SK-N-SH (cell line): ENCODE measurements at regions of chr12 and their contacts with region 1.

Region 1: DNA sequence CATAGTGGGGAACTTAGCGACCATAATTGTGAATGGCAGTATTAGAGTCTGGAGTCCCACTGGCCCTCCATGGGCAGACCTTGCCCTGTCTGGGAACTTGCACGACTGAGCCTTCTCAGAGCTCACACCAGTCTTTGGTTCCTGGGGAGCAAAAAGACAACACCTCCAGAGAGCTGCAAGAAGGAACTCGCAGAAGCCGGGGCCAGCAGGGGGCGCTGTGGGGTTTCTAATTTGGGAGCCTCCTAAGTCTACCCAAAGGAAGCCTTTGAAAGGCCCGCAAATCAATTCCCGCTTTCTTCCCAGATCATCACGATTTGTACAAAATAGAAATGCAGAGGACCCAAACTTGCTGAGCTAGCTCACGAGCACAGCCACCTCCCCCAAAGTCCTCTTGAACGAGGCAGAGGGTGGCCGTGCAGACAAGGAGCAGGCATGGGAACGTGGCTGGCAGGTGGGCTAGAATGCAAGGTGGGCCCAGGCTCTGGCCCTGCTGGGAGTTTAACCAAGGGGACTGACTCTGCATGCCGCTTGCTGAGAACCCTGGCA is 46.3 kb upstream of the FBXO21 start:
- DNase-seq: peak; percentile 70
- H3K4me3 ChIP-seq: no peak overlapping the region; a peak in 1 of 4 replicates
- H3K27ac ChIP-seq: no peak overlapping the region
- H3K4me1 ChIP-seq: no peaks in the 10 kb centered on the region
- H3K27me3 ChIP-seq: no peaks in the 10 kb centered on the region; the same call in 1 of the 2 replicates
- CTCF ChIP-seq: peak; percentile 77
- EP300 ChIP-seq: no peak
- RAD21 ChIP-seq: peak; percentile 80

Region 2: DNA sequence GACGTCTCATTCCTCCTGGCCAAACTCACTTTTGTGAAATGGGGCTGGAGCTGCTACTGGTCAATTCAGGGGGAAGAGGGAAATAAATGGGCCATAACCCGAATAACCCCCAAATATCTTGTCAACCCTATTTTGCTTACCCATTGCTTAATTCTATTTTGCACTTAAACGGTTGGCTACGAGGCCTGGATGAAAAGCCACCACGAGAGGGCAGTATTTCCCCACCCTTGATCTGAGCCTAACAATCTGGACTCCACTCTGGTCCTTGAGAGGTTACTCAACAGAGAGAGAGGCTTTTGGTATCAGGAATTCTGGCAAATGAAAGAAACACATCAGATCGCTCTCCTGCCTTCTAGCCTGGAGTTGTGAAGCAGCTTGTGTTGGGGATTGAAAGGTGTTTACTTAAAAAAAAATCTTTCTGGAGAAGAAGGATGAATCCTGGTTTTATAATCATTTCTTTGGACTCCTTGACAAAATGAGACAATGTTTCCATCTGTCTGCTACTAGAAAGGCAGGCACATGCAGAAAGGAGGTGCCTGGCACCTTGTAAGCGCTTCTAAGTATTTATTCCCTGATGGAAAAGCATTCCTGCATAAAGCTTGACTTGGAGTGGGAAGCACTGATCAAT is 23.9 kb before region 1 on chr12:
- CTCF ChIA-PET with region 1: interaction called, 15 read pairs
- POLR2A ChIA-PET with region 1: no interaction called
- DNase-seq: peak; percentile 83
- H3K4me3 ChIP-seq: peak overlapping the region in 1 of 2 experiments; percentile 35; a peak in 1 of 4 replicates
- H3K27ac ChIP-seq: no peak overlapping the region
- H3K4me1 ChIP-seq: no peaks in the 10 kb centered on the region; a peak in 1 of 4 replicates
- H3K27me3 ChIP-seq: no peaks in the 10 kb centered on the region; the same call in 1 of the 2 replicates
- CTCF ChIP-seq: peak; percentile 96
- EP300 ChIP-seq: no peak
- RAD21 ChIP-seq: peak; percentile 92

Region 3: DNA sequence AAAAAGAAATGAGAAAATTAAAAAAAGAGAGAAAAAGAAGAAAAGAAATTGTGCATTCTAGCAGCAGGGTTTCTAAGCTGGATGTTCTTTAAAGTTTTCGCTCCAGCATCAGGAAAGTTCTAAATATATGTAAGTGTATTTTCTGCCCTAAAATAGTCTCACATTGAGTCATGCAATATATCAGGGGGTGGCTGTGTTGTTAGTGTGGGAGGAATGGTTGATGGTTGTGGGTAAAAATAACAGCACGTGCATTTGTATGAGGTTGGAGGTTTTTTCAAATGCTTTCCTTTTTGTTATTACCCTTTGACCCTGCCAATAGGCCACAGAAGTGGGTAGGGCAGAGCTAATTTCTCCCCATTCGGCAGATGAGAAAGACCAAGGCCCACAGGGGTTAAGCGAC is 18.9 kb after region 1 on chr12:
- CTCF ChIA-PET with region 1: interaction called, 45 read pairs
- POLR2A ChIA-PET with region 1: no interaction called
- DNase-seq: no peak
- H3K4me3 ChIP-seq: no peak overlapping the region
- H3K27ac ChIP-seq: no peak overlapping the region
- H3K4me1 ChIP-seq: no peaks in the 10 kb centered on the region
- H3K27me3 ChIP-seq: no peaks in the 10 kb centered on the region
- CTCF ChIP-seq: no peak
- EP300 ChIP-seq: no peak
- RAD21 ChIP-seq: no peak

Region 4: GRCh38 chr12:117331703-117332102 is 95.2 kb after region 1 on chr12:
- CTCF ChIA-PET with region 1: interaction called, 10 read pairs
- POLR2A ChIA-PET with region 1: no interaction called
- DNase-seq: no peak
- H3K4me3 ChIP-seq: no peak overlapping the region
- H3K27ac ChIP-seq: no peak overlapping the region
- H3K4me1 ChIP-seq: peaks cover 0 to 9% of the 10 kb centered on the region in 2 experiments; a peak in 1 of 4 replicates
- H3K27me3 ChIP-seq: no peaks in the 10 kb centered on the region; the same call in 1 of the 2 replicates
- CTCF ChIP-seq: no peak
- EP300 ChIP-seq: no peak
- RAD21 ChIP-seq: no peak; the same call in 1 of the 2 replicates

Region 5: DNA sequence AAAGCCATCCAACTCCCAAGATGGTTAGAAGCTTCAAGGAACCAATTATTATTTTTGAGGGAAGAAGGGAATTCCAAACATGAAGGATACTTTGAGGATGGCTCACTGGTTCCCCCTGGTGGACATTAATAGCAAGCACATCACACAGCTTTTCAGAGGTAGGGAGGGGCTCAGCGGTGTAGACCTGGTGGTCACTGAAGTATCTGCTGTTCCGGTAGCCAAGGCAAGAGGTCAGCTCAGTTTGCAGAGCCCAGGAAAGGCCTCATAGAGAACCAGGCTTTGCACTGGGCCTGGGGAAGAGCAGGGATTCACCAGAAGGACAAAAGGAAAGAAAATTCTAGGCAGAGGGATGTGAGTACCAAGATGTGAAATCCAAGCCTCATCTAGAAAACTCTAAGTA is 613.5 kb after region 1 on chr12:
- CTCF ChIA-PET with region 1: interaction called, 102 read pairs
- POLR2A ChIA-PET with region 1: no interaction called
- DNase-seq: peak; percentile 81
- H3K4me3 ChIP-seq: no peak overlapping the region; a peak in 1 of 4 replicates
- H3K27ac ChIP-seq: no peak overlapping the region
- H3K4me1 ChIP-seq: no peaks in the 10 kb centered on the region
- H3K27me3 ChIP-seq: no peaks in the 10 kb centered on the region
- CTCF ChIP-seq: peak; percentile 81
- EP300 ChIP-seq: no peak
- RAD21 ChIP-seq: peak; percentile 79